ENCODE measurements at regions of chr22 and their contacts with region 1.

Region 1: GRCh38 chr22:17281440-17281841 is 62.2 kb upstream of the ADA2 start:
- DNase-seq: peak; percentile 51
- ATAC-seq: peak; percentile 45
- H3K4me3 ChIP-seq: peak overlapping the region in 1 of 5 experiments; percentile 16
- H3K4me3 Mint-ChIP-seq: peak overlapping the region; percentile 38
- H3K27ac ChIP-seq: no peak overlapping the region
- H3K27ac Mint-ChIP-seq: no peak overlapping the region
- H3K4me1 ChIP-seq: peaks cover 15 to 17% of the 10 kb centered on the region in 2 donors
- H3K4me1 Mint-ChIP-seq: peaks cover 17% of the 10 kb centered on the region
- H3K27me3 ChIP-seq: no peaks in the 10 kb centered on the region
- H3K27me3 Mint-ChIP-seq: no peaks in the 10 kb centered on the region
- CTCF ChIP-seq: no peak

Region 2: DNA sequence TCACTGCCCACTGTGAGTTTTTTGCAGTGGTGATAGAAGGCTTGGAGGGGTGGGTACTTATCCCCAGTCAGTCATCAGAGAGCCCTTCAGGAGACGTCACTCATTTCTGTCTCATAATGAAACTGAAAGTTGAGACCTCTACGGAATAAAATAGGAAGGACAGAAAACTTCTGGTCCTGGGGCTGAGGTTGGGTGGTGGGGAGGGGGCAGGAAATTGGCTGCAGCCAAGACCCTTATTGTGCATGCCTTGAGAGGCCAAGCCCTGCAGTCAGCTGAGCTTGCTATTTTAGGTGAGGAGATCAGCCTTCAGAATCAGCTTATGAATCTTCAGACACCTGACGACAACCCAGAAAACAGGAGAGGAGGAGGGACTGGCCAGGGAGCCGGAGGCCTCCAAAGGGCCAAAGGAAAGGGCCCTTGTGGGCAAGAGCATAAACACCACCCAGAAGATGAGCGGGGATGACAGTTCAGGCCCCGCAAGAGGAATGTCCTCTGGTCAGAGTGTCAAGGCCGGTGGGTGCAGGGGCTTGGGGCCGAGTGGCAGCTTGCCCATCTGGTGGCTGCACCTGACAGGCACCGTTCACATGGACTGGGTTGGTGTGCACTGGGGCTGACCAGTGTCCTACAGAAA is 44.3 kb before region 1 on chr22:
- CTCF ChIA-PET with region 1: no interaction called
- POLR2A ChIA-PET with region 1: no interaction called
- intact Hi-C with region 1: loop called (anchors 2 kb)
- DNase-seq: peak; percentile 73
- ATAC-seq: peak; percentile 89
- H3K4me3 ChIP-seq: peak overlapping the region in 4 of 5 experiments; percentile 36 to 62 (median 50)
- H3K4me3 Mint-ChIP-seq: peak overlapping the region; percentile 87
- H3K27ac ChIP-seq: peak overlapping the region; percentile 49 to 69
- H3K27ac Mint-ChIP-seq: peak overlapping the region; percentile 90
- H3K4me1 ChIP-seq: peaks cover 12 to 21% of the 10 kb centered on the region in 2 donors
- H3K4me1 Mint-ChIP-seq: peaks cover 17% of the 10 kb centered on the region
- H3K27me3 ChIP-seq: no peaks in the 10 kb centered on the region
- H3K27me3 Mint-ChIP-seq: no peaks in the 10 kb centered on the region
- CTCF ChIP-seq: no peak

Region 3: GRCh38 chr22:17266251-17266971 is 15.0 kb before region 1 on chr22:
- CTCF ChIA-PET with region 1: interaction called, 10 read pairs
- POLR2A ChIA-PET with region 1: no interaction called
- intact Hi-C with region 1: no loop called
- DNase-seq: no peak
- ATAC-seq: no peak
- H3K4me3 ChIP-seq: no peak overlapping the region
- H3K4me3 Mint-ChIP-seq: no peak overlapping the region
- H3K27ac ChIP-seq: no peak overlapping the region
- H3K27ac Mint-ChIP-seq: no peak overlapping the region
- H3K4me1 ChIP-seq: peaks cover 0 to 4% of the 10 kb centered on the region in 2 donors
- H3K4me1 Mint-ChIP-seq: peaks cover 6% of the 10 kb centered on the region
- H3K27me3 ChIP-seq: no peaks in the 10 kb centered on the region
- H3K27me3 Mint-ChIP-seq: no peaks in the 10 kb centered on the region
- CTCF ChIP-seq: no peak

Region 4: DNA sequence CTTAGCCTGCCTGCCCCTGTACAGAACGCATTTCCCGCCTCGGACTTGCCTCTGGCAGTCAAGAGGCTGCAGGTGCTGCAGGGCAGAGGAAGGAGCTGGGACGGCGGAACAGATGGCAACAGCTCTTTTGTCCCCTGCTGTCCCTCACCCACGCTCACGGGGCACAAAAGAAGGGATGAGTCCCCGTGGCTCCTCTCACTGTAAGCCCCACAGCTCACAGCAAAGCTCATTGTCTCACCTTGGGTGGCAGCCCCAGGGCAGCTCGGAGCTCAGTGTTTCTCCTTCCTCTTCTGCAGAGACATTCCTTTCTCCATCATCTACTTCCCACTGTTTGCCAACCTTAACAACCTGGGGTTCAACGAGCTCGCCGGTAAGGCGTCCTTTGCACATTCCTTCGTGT is 306.2 kb after region 1 on chr22:
- CTCF ChIA-PET with region 1: no interaction called
- POLR2A ChIA-PET with region 1: no interaction called
- intact Hi-C with region 1: no loop called
- DNase-seq: no peak
- ATAC-seq: no peak
- H3K4me3 ChIP-seq: no peak overlapping the region
- H3K4me3 Mint-ChIP-seq: no peak overlapping the region
- H3K27ac ChIP-seq: no peak overlapping the region
- H3K27ac Mint-ChIP-seq: no peak overlapping the region
- H3K4me1 ChIP-seq: no peaks in the 10 kb centered on the region
- H3K4me1 Mint-ChIP-seq: no peaks in the 10 kb centered on the region
- H3K27me3 ChIP-seq: no peaks in the 10 kb centered on the region
- H3K27me3 Mint-ChIP-seq: no peaks in the 10 kb centered on the region
- CTCF ChIP-seq: no peak

Measured in B cell (primary cell).